ENCODE measurements at regions of chr3 and their contacts with region 1.

Region 1: DNA sequence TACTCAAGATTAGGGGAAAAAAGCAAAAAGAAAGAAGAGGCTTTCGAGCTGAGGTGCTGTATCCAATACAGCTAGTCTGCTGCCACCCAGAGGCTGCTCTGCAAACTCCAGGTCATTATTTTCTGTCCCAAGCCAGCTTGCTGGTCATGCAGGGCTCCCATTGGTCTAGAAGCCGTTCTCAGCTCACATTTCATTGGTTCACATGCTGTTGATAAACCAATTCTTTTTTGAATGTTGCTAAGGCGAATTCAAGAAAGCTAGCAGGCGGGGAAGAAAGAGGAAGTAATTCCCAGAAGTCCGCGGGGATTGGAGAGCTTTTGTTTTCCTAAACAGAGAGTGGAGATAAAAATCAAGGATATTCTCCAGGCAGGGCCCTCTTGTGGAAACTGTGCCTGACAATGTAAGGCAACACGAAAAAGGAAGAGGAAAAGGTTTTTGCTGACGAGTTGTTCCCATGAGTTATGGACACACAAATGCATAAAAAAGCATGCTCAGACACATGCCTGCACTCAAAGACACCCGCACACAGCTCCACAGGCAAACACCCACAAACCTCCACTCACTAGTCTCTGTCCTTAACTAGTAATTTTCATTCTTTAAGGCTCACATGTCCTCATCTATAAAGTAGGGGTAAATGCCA is 33.4 kb downstream of the FSTL1 start:
- DNase-seq: peak; percentile 93
- H3K4me3 Mint-ChIP-seq: peak overlapping the region; percentile 74
- H3K27ac Mint-ChIP-seq: no peak overlapping the region
- H3K4me1 Mint-ChIP-seq: peaks cover 12% of the 10 kb centered on the region
- H3K27me3 Mint-ChIP-seq: no peaks in the 10 kb centered on the region

Region 2: GRCh38 chr3:119819806-119820205 is 597.6 kb before region 1 on chr3:
- CTCF ChIA-PET with region 1: interaction called, 6 read pairs
- POLR2A ChIA-PET with region 1: no interaction called
- intact Hi-C with region 1: loop called (anchors 5 kb)
- DNase-seq: no peak
- H3K4me3 Mint-ChIP-seq: no peak overlapping the region
- H3K27ac Mint-ChIP-seq: no peak overlapping the region
- H3K4me1 Mint-ChIP-seq: peaks cover 2% of the 10 kb centered on the region
- H3K27me3 Mint-ChIP-seq: no peaks in the 10 kb centered on the region

Region 3: DNA sequence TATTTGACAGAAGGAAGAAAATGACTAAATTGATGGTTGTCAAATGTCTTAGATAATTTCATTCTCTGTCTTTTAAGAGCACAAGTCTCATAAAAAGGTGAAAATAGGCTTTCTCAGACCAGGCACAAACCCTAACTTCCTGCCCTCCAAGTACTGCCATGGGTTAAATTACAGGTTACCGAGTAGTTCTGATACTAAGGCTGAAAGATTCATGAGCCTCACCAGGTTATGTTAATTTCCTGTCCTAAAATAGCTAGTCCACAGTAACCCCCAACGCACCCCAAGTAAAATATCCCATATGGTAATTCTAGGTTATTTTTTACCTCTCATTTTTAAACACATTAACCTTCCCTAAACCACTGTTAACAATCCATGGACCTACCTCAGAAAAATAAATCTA is 365.2 kb before region 1 on chr3:
- CTCF ChIA-PET with region 1: no interaction called
- POLR2A ChIA-PET with region 1: no interaction called
- intact Hi-C with region 1: no loop called
- DNase-seq: no peak
- H3K4me3 Mint-ChIP-seq: no peak overlapping the region
- H3K27ac Mint-ChIP-seq: peak overlapping the region; percentile 19
- H3K4me1 Mint-ChIP-seq: peaks cover 57% of the 10 kb centered on the region
- H3K27me3 Mint-ChIP-seq: no peaks in the 10 kb centered on the region

Region 4: GRCh38 chr3:120245386-120245785 is 172.0 kb before region 1 on chr3:
- CTCF ChIA-PET with region 1: interaction called, 241 read pairs
- POLR2A ChIA-PET with region 1: interaction called, 3 read pairs
- intact Hi-C with region 1: loop called (anchors 1 kb)
- DNase-seq: no peak
- H3K4me3 Mint-ChIP-seq: no peak overlapping the region
- H3K27ac Mint-ChIP-seq: no peak overlapping the region
- H3K4me1 Mint-ChIP-seq: no peaks in the 10 kb centered on the region
- H3K27me3 Mint-ChIP-seq: peaks cover 14% of the 10 kb centered on the region

Region 5: DNA sequence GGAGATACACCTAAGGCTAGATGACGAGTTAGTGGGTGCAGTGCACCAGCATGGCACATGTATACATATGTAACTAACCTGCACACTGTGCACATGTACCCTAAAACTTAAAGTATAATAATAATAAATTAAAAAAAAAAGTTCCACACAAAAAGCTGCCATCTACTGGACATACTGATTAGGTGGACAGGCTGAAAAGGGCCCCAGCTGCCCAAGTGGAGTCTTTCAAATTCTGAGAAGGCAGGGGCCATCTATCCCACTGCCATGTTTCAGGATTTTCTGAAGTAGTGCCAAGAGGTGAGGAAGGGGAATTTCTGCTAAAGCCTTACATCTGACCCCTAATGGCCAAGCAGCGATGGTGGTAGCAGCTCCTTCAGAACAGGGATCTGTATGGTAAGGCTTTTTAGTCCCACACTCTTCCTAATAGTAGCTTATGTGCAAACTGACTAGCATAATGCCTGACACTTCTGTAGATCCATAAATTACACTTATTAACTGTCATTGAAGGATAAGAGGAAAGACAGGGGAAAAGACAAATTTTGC is 25.7 kb after region 1 on chr3:
- CTCF ChIA-PET with region 1: interaction called, 10 read pairs
- POLR2A ChIA-PET with region 1: no interaction called
- intact Hi-C with region 1: no loop called
- DNase-seq: no peak
- H3K4me3 Mint-ChIP-seq: no peak overlapping the region
- H3K27ac Mint-ChIP-seq: no peak overlapping the region
- H3K4me1 Mint-ChIP-seq: no peaks in the 10 kb centered on the region
- H3K27me3 Mint-ChIP-seq: peaks cover 13% of the 10 kb centered on the region

Region 6: DNA sequence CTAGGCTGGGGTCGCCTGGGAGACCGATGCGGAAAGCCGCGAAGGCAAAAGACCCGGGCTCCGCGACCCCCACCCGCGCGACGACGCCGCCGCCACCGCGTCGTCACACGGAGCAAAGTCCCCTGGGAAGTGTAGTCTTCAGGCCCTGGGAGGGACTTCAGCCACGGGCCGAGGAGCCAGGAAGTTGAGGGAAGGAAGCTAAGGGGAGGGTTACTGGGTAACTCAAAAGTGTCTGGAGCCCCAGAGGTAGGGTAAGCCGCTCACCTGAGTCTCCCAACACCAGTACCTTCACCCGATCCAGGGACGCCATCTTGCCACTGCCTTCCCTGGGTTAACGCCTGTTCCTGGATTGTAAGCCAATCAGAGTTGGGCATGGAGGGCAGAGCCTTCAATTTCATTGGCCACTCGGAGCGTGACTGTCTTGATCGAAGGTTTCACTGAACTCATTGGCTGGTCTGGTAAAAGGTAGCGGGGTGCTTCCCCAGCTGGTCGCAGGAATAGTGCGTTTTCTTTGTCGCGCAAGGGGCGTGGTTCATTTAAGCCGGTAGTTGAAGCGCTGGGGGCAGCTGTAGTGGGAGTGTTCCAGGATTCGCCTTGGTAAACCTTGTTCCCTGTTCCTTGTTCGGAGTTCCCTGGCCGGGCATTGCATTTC is 324.9 kb after region 1 on chr3 and contains the starts of genes GTF2E1 and RABL3:
- CTCF ChIA-PET with region 1: no interaction called
- POLR2A ChIA-PET with region 1: no interaction called
- intact Hi-C with region 1: loop called (anchors 1 kb)
- DNase-seq: peak; percentile 98
- H3K4me3 Mint-ChIP-seq: peak within 1 kb of the TSS; percentile 96
- H3K27ac Mint-ChIP-seq: peak within 1 kb of the TSS; percentile 94
- H3K4me1 Mint-ChIP-seq: peaks cover 28% of the 10 kb centered on the region
- H3K27me3 Mint-ChIP-seq: peaks cover 2% of the 10 kb centered on the region
- total RNA-seq, gene GTF2E1: 18.4 to 19.8 TPM
- total RNA-seq, gene RABL3: 28.7 to 30.0 TPM